ENCODE measurements at regions of chr18 and their contacts with region 1.

Region 1: DNA sequence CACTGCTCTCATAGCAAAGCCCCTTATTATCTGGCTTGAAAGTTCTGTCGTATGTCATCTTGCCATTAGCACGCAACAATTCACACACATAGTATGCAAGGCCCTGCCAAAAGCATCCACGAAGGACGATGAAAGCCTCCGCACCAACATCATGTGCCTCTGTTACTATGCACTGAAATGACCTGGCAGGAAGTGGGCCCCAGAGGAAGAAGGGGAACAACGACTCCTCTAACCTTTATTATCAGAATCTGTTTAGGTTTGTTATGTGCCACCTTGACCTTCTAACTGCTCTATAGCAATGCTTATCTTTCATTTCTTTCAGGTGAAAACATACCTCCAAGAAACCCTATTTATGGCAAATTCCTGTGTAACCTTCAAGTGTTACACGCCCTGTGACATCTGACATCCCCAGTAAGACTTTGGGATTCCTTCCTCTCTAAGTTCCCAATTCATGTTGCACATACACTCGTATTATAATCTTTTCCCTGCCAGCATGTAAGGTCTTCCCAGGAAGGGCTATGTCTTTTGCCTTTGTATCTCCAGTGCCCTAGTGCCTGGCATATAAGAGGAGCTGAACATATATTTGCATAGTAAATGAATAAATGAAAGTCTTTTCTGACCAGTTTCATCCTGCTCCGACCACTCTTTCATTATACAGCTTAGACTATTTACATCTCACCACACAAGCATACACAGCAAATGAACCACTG is 7.0 kb upstream of the NDUFV2 start:
- DNase-seq: peak; percentile 87
- ATAC-seq: peak; percentile 73
- H3K4me3 Mint-ChIP-seq: peak overlapping the region; percentile 63
- H3K27ac Mint-ChIP-seq: peak overlapping the region; percentile 98
- H3K4me1 Mint-ChIP-seq: peaks cover 66% of the 10 kb centered on the region
- H3K27me3 Mint-ChIP-seq: no peaks in the 10 kb centered on the region

Region 2: GRCh38 chr18:8794133-8794986 is 301.1 kb before region 1 on chr18:
- CTCF ChIA-PET with region 1: no interaction called
- DNase-seq: no peak
- ATAC-seq: no peak
- H3K4me3 Mint-ChIP-seq: no peak overlapping the region
- H3K27ac Mint-ChIP-seq: no peak overlapping the region
- H3K4me1 Mint-ChIP-seq: no peaks in the 10 kb centered on the region
- H3K27me3 Mint-ChIP-seq: peaks cover under 1% of the 10 kb centered on the region

Region 3: DNA sequence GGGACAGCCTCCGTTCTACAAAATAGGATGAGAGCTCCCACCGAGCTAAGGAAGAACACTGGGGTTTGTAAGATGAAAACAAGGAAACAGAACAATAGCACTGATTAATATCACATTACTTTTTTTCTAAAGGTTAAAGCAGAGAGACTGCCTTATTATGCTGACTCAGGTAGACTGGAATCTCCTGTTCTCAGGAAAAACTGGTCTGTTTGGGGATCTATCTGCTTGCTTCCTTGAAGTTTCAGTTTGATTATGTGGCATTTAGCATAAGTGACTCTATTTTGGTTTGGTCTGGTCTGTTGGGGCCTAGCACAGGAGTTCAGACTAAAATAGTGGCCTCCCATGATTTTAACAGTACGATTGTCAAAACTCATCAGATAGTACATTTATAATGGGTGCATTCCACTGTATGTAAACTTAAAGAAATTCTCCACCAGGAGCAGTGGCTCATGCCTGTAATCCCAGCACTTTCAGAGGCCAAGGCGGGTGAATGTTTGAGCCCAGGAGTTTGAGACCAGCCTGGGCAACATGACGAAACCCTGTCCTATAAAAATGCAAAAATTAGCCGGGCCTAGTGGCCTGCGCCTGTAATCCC is 57.1 kb before region 1 on chr18:
- CTCF ChIA-PET with region 1: no interaction called
- DNase-seq: no peak
- ATAC-seq: no peak
- H3K4me3 Mint-ChIP-seq: no peak overlapping the region
- H3K27ac Mint-ChIP-seq: no peak overlapping the region
- H3K4me1 Mint-ChIP-seq: peaks cover 5% of the 10 kb centered on the region
- H3K27me3 Mint-ChIP-seq: no peaks in the 10 kb centered on the region

Region 4: GRCh38 chr18:9082711-9083510 is 12.5 kb before region 1 on chr18:
- CTCF ChIA-PET with region 1: interaction called, 13 read pairs
- DNase-seq: peak; percentile 82
- ATAC-seq: peak; percentile 84
- H3K4me3 Mint-ChIP-seq: peak overlapping the region; percentile 53
- H3K27ac Mint-ChIP-seq: peak overlapping the region; percentile 94
- H3K4me1 Mint-ChIP-seq: peaks cover 59% of the 10 kb centered on the region
- H3K27me3 Mint-ChIP-seq: no peaks in the 10 kb centered on the region

Measured in activated CD8-positive, alpha-beta memory T cell treated with anti-CD3 and anti-CD28 coated beads, Interleukin-2, amount 10 ng/mL, durations not matched to agents 7 days and 5 days (primary cell).